Right cardiac atrium (tissue), 5 donors: ENCODE measurements at regions of chr2 and their contacts with region 1.

Region 1: DNA sequence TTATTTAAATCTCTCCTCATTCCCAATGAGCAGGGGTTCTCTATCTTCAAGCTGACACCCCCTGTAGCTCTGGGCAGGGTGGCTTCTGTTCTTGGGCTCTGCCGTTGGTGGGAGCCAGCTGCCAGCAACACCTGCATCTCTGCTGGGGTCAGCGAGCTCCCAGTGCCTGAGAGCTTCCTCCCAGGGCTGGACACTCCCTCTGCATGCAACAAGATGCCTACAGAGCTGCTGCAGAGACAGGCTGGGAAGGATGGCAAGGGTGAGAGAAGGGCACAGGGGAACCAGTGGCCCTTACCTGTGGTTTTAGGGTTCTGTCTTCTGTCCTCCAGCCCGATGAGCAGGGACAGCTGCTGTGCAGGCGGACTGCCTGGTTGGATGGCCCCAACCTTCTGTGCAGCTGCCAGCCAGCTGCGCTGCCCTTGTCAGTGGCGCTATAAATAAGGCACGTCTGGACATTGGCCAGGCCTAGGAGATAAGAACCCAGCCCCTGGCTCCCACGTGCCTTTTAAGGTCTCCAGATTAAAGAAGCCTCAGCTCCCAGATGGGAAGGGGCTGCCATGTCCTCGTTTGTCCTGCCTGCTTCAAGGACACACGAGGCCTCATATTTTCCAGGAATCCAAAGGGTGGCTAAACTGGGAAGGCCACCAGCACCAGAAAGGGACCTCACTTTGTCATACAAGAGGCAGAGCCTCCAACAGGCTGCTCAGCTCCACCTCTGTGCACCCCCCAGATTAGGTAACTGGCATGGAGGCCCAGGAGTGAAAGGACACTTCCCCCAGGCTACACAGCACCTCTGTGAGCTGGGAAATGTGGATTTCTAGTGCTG is 39.5 kb upstream of the FHL2 start:
- DNase-seq: peak; percentile 64 to 88 (median 86)
- ATAC-seq: peak; percentile 88 to 92
- H3K4me3 ChIP-seq: peak overlapping the region; percentile 65
- H3K27ac ChIP-seq: peak overlapping the region; percentile 87
- H3K4me1 ChIP-seq: no peaks in the 10 kb centered on the region
- H3K27me3 ChIP-seq: no peaks in the 10 kb centered on the region

Region 2: GRCh38 chr2:105337124-105338019 is 100.9 kb before region 1 on chr2 and contains the start of gene C2orf49:
- intact Hi-C with region 1: no loop called
- DNase-seq: peak; percentile 89 to 95 (median 94)
- ATAC-seq: peak; percentile 95 to 96
- H3K4me3 ChIP-seq: peak within 1 kb of the TSS; percentile 96
- H3K27ac ChIP-seq: peak within 1 kb of the TSS; percentile 94
- H3K4me1 ChIP-seq: peaks cover 2% of the 10 kb centered on the region
- H3K27me3 ChIP-seq: no peaks in the 10 kb centered on the region
- total RNA-seq, gene C2orf49: 13.2 to 20.3 (median 17.0) TPM

Region 3: DNA sequence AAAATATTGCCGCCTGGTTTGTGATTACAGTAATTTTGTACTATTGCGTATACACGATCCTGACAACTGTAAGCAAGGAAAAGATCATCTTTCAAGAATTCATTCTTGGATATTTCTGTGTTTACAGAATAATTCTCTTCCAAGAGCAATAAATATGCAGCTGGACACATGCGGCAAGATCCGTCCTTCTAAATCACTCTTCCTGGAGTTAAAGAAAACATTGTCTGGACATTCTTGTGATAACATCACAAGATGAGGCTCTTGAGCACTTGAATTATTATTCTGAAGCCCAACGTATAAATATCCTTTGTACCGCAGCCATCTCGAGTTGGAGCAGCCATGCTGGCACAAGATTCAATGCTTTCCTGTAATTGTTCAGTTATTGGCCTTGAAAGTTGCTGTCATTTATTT is 49.3 kb before region 1 on chr2:
- intact Hi-C with region 1: loop called in 1 of 4 experiments (anchors 10 kb)
- DNase-seq: no peak
- ATAC-seq: peak; percentile 25 to 36
- H3K4me3 ChIP-seq: no peak overlapping the region
- H3K27ac ChIP-seq: no peak overlapping the region
- H3K4me1 ChIP-seq: peaks cover 9% of the 10 kb centered on the region
- H3K27me3 ChIP-seq: no peaks in the 10 kb centered on the region